B cell (primary cell): ENCODE measurements at regions of chr11 and their contacts with region 1.

Region 1: GRCh38 chr11:102007567-102008437 is 39.4 kb upstream of the CFAP300 start:
- DNase-seq: peak; percentile 52
- ATAC-seq: no peak
- H3K4me3 ChIP-seq: no peak overlapping the region
- H3K4me3 Mint-ChIP-seq: no peak overlapping the region
- H3K27ac ChIP-seq: no peak overlapping the region
- H3K27ac Mint-ChIP-seq: no peak overlapping the region
- H3K4me1 ChIP-seq: no peaks in the 10 kb centered on the region
- H3K4me1 Mint-ChIP-seq: no peaks in the 10 kb centered on the region
- H3K27me3 ChIP-seq: peaks cover 0 to 6% (median 5%) of the 10 kb centered on the region in 4 experiments
- H3K27me3 Mint-ChIP-seq: peaks cover 19% of the 10 kb centered on the region
- CTCF ChIP-seq: peak; percentile 81

Region 2: DNA sequence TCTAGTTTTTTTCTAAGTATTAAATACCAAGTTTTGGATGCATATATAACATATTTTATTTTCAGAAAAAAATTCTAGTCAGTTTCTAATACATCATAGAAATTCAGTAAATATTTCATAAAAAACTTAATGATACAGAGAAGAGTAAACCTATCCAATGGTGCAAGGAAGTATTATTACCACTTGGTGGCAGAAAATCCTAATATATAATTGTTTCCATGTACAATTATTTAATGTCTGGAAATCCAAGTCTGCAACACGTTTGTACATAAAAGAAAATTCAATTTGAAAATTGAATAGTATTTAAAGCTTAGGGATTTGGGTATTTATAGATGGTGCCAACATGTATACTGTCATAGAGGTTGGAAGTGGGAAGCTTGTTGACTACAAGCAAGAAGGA is 551.0 kb before region 1 on chr11:
- CTCF ChIA-PET with region 1: interaction called, 13 read pairs
- POLR2A ChIA-PET with region 1: no interaction called
- intact Hi-C with region 1: loop called (anchors 2 kb)
- DNase-seq: peak; percentile 13
- ATAC-seq: no peak
- H3K4me3 ChIP-seq: no peak overlapping the region
- H3K4me3 Mint-ChIP-seq: no peak overlapping the region
- H3K27ac ChIP-seq: no peak overlapping the region
- H3K27ac Mint-ChIP-seq: no peak overlapping the region
- H3K4me1 ChIP-seq: no peaks in the 10 kb centered on the region
- H3K4me1 Mint-ChIP-seq: no peaks in the 10 kb centered on the region
- H3K27me3 ChIP-seq: no peaks in the 10 kb centered on the region
- H3K27me3 Mint-ChIP-seq: peaks cover under 1% of the 10 kb centered on the region
- CTCF ChIP-seq: peak; percentile 24

Region 3: DNA sequence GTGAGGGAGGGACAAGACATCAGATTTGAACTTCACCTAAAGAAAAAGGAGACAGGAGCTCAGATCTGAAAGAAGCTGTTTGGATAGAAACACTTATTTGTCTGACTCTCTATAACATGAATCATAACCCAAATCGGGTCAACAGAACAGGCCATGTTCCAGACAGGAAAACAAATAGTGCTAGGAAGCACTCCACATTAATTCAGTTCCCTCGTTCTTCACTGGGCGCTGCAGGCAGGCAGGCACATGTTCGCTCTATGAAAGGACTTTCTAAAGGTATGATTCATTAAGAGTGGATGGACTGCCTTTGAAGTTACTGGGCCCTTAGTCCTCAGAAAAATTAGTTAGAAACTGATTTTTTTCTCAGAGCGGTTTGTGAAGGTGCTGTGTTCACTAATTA is 286.5 kb before region 1 on chr11:
- CTCF ChIA-PET with region 1: no interaction called
- POLR2A ChIA-PET with region 1: no interaction called
- intact Hi-C with region 1: no loop called
- DNase-seq: no peak
- ATAC-seq: no peak
- H3K4me3 ChIP-seq: no peak overlapping the region
- H3K4me3 Mint-ChIP-seq: no peak overlapping the region
- H3K27ac ChIP-seq: no peak overlapping the region
- H3K27ac Mint-ChIP-seq: no peak overlapping the region
- H3K4me1 ChIP-seq: no peaks in the 10 kb centered on the region
- H3K4me1 Mint-ChIP-seq: no peaks in the 10 kb centered on the region
- H3K27me3 ChIP-seq: no peaks in the 10 kb centered on the region
- H3K27me3 Mint-ChIP-seq: no peaks in the 10 kb centered on the region
- CTCF ChIP-seq: no peak

Region 4: DNA sequence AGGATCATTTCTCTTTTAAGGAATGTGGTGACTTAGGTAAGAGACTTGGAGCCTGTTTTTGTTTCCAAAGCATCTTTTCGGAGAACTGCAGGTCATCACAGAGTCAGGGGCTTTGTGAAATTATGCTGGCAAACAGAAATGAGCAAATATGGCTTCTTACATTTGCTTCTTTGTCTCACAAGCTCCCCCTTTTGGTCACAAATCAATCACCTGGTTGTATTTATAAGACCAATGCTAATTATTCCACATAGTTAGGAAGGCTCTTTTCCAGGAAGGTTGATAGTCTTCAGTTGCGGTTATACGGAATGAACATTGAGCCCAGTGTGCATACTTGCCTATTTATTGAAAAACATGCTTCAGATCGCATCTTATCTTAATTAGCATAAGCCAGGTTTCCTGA is 127.6 kb before region 1 on chr11:
- CTCF ChIA-PET with region 1: interaction called, 10 read pairs
- POLR2A ChIA-PET with region 1: no interaction called
- intact Hi-C with region 1: no loop called
- DNase-seq: peak; percentile 30
- ATAC-seq: no peak
- H3K4me3 ChIP-seq: no peak overlapping the region
- H3K4me3 Mint-ChIP-seq: no peak overlapping the region
- H3K27ac ChIP-seq: no peak overlapping the region
- H3K27ac Mint-ChIP-seq: no peak overlapping the region
- H3K4me1 ChIP-seq: no peaks in the 10 kb centered on the region
- H3K4me1 Mint-ChIP-seq: no peaks in the 10 kb centered on the region
- H3K27me3 ChIP-seq: peaks cover 0 to 11% (median 4%) of the 10 kb centered on the region in 4 experiments
- H3K27me3 Mint-ChIP-seq: peaks cover 48% of the 10 kb centered on the region
- CTCF ChIP-seq: peak; percentile 33

Region 5: DNA sequence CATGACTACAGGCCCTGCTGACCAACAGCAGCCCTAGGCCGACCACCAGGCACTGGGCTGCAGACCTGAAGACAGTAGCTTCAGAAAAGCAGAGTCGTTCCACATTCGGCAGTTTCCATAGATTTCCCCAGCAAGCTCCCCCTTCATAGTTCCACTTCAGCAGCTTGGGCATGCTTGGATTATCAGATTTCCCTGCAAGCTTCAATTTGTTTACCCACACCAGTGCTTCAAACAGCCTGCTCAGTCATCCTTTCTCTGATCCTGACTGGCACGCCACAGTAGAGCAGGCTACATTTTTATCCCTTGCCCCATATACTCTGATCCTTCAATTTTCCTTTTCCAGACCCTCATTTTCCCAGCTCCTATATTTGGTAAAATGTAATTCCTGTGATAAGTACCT is 11.7 kb before region 1 on chr11:
- CTCF ChIA-PET with region 1: interaction called, 18 read pairs
- POLR2A ChIA-PET with region 1: no interaction called
- intact Hi-C with region 1: no loop called
- DNase-seq: no peak
- ATAC-seq: no peak
- H3K4me3 ChIP-seq: no peak overlapping the region
- H3K4me3 Mint-ChIP-seq: no peak overlapping the region
- H3K27ac ChIP-seq: no peak overlapping the region
- H3K27ac Mint-ChIP-seq: no peak overlapping the region
- H3K4me1 ChIP-seq: no peaks in the 10 kb centered on the region
- H3K4me1 Mint-ChIP-seq: no peaks in the 10 kb centered on the region
- H3K27me3 ChIP-seq: no peaks in the 10 kb centered on the region
- H3K27me3 Mint-ChIP-seq: no peaks in the 10 kb centered on the region
- CTCF ChIP-seq: no peak

Region 6: DNA sequence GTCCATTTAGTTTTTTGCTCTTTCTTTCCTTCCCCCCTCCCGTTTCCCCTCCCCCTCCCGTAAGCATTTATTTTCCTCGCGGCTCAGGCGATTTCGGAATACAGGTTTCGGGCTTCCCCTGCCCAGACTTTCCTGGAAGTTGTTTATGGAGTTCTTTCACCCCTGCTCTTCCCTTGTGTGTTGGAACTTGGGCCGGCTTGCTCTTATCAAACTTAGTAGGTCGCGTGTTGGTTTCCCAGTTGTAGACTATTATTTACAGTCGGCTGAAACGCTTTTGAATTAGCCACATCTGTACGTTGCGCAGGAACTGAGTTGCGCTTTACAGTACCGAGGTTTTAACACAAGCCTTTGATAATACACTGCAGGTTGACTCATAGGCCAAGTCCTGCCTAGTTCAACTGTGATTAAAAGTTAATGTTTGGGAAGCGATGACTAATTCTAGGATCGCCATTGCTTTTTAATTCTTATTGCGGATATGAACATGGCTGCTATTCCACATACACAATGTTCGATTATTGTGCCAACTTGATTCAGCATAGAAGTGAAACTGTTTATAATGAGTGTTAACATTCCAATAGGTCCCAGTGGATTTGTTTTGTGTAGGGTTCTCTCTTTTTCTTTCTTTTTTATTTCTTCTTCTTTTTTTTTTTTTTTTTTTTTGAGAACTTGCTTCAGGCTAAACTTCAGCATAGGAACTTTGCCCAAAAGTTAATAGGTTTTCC is 104.1 kb after region 1 on chr11:
- CTCF ChIA-PET with region 1: no interaction called
- POLR2A ChIA-PET with region 1: no interaction called
- intact Hi-C with region 1: no loop called
- DNase-seq: peak; percentile 41
- ATAC-seq: no peak
- H3K4me3 ChIP-seq: peak overlapping the region in 2 of 5 experiments; percentile 70 to 89
- H3K4me3 Mint-ChIP-seq: peak overlapping the region; percentile 86
- H3K27ac ChIP-seq: no peak overlapping the region
- H3K27ac Mint-ChIP-seq: peak overlapping the region; percentile 61
- H3K4me1 ChIP-seq: peaks cover 17 to 20% of the 10 kb centered on the region in 2 donors
- H3K4me1 Mint-ChIP-seq: peaks cover 15% of the 10 kb centered on the region
- H3K27me3 ChIP-seq: peaks cover 0 to 50% (median 37%) of the 10 kb centered on the region in 4 experiments
- H3K27me3 Mint-ChIP-seq: peaks cover 67% of the 10 kb centered on the region
- CTCF ChIP-seq: no peak